Posterior vena cava (tissue), 2 donors: ENCODE measurements at regions of chr5 and their contacts with region 1.

Region 1: GRCh38 chr5:19554524-19554923 is 433.5 kb downstream of the CDH18 start:
- DNase-seq: no peak

Region 2: DNA sequence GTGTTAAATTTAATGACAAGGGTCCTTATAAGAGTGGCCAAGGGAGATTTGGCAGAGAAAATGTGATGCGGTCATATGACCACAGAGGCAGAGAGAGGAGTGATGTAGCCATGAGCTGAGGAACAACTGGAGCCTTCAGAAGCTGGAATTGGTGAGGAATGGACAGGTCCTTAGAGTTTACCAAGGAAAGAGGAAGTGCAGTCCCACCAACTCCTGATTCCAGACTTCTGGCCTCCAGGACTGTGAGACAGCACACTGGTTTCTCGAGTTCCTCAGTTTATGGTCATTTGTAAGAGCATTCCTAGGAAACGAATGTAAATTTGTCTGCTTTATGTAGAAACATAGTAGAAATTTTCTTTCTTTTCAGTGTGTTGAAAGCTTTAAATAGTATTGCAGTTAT is 23.4 kb after region 1 on chr5:
- intact Hi-C with region 1: loop called in 1 of 2 experiments (anchors 1 kb)
- DNase-seq: no peak